BJ (cell line): ENCODE measurements at regions of chr1 and their contacts with region 1.

Region 1: GRCh38 chr1:32107742-32108661 is at the start of gene KPNA6:
- DNase-seq: peak; percentile 72
- H3K4me3 ChIP-seq: peak within 1 kb of the TSS; percentile 90
- H3K27me3 ChIP-seq: no peaks in the 10 kb centered on the region
- CTCF ChIP-seq: no peak
- polyA plus RNA-seq, gene KPNA6: 26.6 and 29.8 TPM in 2 replicates

Region 2: DNA sequence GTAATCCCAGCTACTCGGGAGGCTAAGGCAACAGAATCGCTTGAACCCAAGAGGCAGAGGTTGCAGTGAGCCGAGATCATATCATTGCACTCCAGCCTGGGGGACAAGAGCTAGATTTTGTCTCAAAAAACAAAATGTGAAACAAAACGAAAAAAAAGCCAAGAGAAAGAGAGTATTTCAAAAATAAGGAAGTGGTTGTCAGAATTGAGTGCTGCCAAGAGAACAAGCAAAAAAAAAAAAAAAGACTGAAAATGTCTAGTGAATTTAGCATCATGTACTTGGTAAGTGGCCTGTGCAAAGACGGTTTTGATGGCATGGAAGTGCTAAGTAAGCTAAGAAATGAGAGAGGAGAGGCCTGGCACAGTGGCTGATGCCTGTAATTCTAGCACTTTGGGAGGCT is 14.1 kb after region 1 on chr1:
- CTCF ChIA-PET with region 1: interaction called, 17 read pairs
- POLR2A ChIA-PET with region 1: no interaction called
- DNase-seq: no peak
- H3K4me3 ChIP-seq: no peak overlapping the region
- H3K27me3 ChIP-seq: no peaks in the 10 kb centered on the region
- CTCF ChIP-seq: no peak

Region 3: DNA sequence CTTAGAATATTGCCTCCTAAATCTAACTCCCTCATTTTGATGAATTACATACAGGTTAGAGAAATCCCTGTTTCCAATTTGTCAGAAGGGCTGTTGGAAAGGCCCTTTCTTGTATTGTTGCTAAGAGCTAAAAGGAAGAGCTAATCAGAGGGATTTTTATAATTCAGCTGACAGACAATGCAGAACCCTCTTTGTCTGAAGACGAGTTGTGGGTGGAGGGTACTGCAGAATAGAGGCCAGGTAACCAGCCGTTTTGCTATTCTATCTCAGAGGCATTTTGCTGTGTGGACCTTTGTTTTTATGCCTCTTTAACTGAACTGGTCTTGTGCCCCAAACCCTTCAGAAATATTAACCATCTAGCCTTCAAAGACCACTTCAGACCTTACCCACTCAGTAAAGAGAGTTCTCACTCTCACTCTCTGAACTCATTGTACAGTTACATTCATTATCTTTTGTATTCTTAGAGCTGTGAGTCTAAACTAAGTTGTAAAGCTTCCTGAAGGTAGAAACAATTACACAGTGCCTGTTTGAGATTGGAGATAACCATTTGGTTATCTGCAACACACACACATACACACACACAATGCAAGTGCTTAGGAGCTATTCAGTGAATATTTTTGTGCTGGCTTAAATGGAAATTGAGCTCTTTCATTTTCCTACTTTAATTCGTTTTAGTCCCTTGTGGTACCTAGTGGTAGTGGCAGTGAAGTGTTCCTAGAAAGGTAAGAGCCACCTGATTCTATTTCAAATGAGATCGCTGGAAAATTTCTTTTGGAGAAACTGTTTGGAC is 19.6 kb after region 1 on chr1:
- CTCF ChIA-PET with region 1: interaction called, 17 read pairs
- POLR2A ChIA-PET with region 1: no interaction called
- DNase-seq: no peak
- H3K4me3 ChIP-seq: no peak overlapping the region
- H3K27me3 ChIP-seq: no peaks in the 10 kb centered on the region
- CTCF ChIP-seq: no peak

Region 4: GRCh38 chr1:32142446-32143301 is 34.7 kb after region 1 on chr1:
- CTCF ChIA-PET with region 1: no interaction called
- POLR2A ChIA-PET with region 1: no interaction called
- DNase-seq: peak; percentile 88
- H3K4me3 ChIP-seq: no peak overlapping the region
- H3K27me3 ChIP-seq: no peaks in the 10 kb centered on the region
- CTCF ChIP-seq: no peak

Region 5: DNA sequence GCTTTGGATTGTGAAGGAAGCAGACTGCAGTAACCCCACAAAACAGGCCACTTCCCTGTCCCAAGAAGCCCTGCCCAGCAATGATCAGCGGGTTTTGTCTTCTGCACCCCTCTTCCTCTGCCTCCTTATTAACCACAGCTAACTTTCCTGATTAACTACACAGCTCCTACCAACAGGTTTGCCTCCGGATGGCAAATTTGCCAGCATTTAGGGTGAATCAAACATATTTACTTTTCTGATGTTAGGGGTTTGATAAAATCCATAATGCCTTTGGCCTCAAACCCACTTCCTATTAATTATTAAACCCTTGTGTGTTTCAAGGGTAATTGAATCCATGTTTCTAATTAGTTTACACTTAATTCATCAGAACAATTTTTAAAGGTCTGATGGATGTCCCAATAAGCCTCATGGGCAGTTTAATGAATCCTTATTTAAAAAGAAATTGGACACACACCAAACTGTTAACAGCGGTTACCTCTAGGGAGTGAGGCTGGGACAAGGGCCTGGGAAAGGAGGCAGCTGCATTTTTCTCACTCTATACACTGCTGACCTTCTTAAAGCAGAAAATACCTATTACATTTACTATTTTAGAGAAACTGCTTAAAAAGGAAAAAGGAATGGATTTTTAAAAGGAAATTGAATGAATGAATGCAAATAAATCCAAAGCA is 1965.2 kb after region 1 on chr1:
- CTCF ChIA-PET with region 1: no interaction called
- POLR2A ChIA-PET with region 1: interaction called, 14 read pairs
- DNase-seq: no peak
- H3K4me3 ChIP-seq: no peak overlapping the region
- H3K27me3 ChIP-seq: no peaks in the 10 kb centered on the region
- CTCF ChIP-seq: no peak